ENCODE measurements at regions of chr17 and their contacts with region 1.

Region 1: DNA sequence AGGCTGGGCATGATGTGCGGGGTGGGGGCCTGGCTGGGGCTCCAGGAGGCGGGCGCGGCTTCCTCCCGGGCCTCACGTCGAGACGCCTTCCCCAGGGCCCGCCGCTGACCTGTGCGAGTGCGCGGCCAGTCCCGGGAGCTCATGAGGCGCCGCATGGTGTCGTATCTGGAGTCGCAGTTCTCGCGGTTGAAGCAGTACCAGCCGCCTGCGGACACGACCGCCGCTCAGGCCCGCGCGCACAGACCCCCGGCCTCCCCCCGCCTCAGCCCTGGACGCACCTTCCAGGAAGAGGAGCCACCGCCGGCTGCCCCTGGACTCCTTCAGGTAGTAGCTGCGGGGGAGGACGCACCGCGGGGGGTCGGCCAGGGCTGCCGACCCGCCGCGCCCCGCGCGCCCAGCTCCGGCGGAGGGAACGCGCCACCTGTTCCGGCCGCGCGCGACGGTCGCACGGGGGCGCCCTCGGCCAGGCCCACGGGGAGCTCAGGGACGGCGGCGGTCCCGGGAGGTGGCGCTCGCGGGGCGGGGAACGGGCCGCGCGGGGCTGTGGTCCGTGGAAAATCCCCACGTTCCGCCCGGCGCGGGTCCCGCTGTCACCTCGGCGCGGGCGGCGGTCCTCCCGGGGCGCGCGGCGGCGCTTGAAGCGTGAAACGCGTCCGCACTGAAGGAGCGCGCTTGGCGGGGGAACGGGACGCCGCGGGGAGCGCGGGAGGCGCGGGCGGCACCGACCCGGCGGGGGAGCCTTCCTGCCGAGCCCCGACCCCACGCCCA is 1.4 kb downstream of the NOTUM start:
- DNase-seq: peak; percentile 88
- ATAC-seq: peak; percentile 93
- H3K4me3 ChIP-seq: peak overlapping the region; percentile 47
- H3K27ac ChIP-seq: no peak overlapping the region
- H3K4me1 ChIP-seq: peaks cover 9% of the 10 kb centered on the region
- H3K27me3 ChIP-seq: peaks cover 41% of the 10 kb centered on the region
- CTCF ChIP-seq: peak; percentile 54

Region 2: DNA sequence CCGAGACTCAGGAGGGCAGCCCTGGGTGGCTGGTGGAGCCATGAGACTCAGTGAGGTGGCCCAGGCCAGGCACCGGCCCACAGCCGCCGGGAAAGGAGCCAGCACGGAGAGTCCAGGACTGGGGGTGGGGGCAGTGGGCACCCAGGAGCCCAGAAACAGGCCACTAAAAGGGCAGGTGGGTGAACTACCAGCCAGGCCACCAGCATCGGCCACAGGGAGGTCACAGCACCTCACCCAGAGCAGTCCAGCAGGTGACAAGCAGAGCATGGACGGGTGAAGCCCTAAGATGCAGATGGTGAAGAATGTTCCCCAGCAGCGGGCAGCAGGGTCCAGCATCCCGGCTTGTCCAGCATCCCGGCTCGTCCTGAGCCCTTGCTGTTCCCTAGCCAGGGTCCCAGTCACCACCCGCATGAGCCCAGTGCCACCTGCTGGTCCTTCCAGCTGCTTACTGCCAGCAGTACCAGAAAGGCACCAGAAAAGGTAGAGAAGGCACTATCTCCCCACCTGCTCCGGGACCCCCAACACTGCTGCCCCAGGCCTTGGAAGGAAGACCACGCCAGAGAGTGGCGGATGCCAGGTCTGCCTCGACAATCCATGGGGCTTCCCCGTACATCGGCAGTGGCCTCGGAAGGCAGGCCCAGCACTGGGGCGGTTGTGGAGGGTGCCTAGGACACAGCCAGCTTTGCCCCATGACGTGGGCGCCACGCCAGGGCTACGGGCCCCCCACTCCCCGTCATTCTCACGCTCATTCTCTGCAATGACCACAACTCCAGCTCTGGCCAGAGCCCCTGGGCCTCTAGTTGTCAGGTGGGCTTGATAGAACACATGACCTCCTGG is 61.6 kb after region 1 on chr17:
- intact Hi-C with region 1: loop called (anchors 2 kb)
- DNase-seq: peak; percentile 90
- ATAC-seq: peak; percentile 15
- H3K4me3 ChIP-seq: peak overlapping the region; percentile 98
- H3K27ac ChIP-seq: no peak overlapping the region
- H3K4me1 ChIP-seq: peaks cover 20% of the 10 kb centered on the region
- H3K27me3 ChIP-seq: no peaks in the 10 kb centered on the region
- CTCF ChIP-seq: peak; percentile 71

Region 3: DNA sequence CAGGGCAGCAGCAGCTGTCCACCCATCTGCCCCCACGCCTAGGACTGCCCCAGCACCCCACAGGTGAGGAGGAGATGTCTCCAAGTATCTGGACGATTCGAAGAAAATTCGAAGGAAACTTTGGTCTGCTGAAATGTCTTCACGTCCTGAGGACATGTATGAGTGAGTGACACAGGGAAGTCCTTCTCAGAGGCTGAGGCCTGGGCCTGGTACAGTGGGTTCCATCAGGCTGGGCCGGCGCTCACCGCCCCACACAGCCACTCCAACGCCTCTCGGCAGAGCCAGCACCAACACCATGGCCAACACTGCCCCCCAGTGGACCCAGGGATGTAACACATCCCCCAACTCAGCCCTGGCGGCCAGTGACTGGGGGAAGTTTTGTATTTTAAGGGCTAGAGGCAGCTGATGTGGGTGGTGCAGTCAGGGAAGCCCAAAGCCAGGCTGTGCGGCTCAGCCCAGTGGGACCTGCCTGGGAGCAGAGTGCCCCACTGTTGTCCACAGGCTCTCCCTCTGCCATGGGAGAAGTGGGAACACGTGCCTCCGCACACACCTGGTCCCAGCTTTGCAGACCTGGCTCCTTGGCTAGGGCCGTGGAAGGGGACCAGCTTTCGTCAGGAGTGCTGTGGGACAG is 194.3 kb after region 1 on chr17:
- intact Hi-C with region 1: loop called (anchors 10 kb)
- DNase-seq: peak; percentile 92
- ATAC-seq: peak; percentile 96
- H3K4me3 ChIP-seq: no peak overlapping the region
- H3K27ac ChIP-seq: no peak overlapping the region
- H3K4me1 ChIP-seq: no peaks in the 10 kb centered on the region
- H3K27me3 ChIP-seq: no peaks in the 10 kb centered on the region
- CTCF ChIP-seq: peak; percentile 92

Region 4: GRCh38 chr17:82273327-82274133 is 314.0 kb after region 1 on chr17 and contains the start of gene CSNK1D:
- intact Hi-C with region 1: no loop called
- DNase-seq: peak; percentile 96
- ATAC-seq: peak; percentile 90
- H3K4me3 ChIP-seq: peak within 1 kb of the TSS; percentile 83
- H3K27ac ChIP-seq: peak within 1 kb of the TSS; percentile 97
- H3K4me1 ChIP-seq: peaks cover 44% of the 10 kb centered on the region
- H3K27me3 ChIP-seq: no peaks in the 10 kb centered on the region
- CTCF ChIP-seq: no peak
- total RNA-seq, gene CSNK1D: 150 TPM